HEK293T (cell line): ENCODE measurements at regions of chr14 and their contacts with region 1.

Region 1: GRCh38 chr14:69398053-69398817 is at the starts of genes ERH and SLC39A9:
- DNase-seq: peak; percentile 90

Region 2: GRCh38 chr14:69387311-69387710 is 10.9 kb before region 1 on chr14:
- CTCF ChIA-PET with region 1: no interaction called
- POLR2A ChIA-PET with region 1: interaction called, 15 read pairs
- DNase-seq: no peak

Region 3: DNA sequence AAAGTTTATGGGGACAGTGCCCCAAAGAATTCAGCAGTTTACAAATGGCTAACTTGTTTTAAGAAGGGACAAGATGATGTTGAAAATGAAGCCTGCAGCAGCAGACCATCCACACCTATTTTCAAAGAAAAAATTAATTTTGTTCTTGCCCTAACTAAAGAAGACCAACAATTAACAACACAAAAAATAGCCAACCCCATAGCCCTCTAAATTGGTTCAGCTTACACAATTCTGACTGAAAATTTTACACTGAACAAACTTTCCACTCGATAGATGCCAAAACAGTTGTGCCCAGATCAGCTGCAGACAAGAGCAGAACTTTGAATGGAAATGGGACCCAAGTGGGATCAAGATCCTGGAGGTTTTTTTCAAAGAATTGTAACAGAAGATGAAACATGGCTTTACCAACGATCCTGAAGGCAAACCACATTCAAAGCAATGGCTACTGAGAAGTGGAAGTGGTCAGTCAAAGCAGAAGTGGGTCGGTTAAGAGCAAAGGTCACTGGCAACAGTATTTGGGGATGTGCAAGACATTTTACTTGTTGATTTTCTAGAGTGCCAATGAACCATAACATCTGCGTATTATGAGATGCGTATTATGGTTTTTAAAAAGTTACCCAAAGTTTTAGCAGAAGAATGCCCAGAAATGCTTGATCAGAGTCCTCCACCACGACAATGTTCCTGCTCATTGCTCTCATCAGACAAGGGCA is 30.2 kb after region 1 on chr14:
- CTCF ChIA-PET with region 1: no interaction called
- POLR2A ChIA-PET with region 1: no interaction called
- DNase-seq: no peak